CD8-positive, alpha-beta T cell (primary cell): ENCODE measurements at regions of chr7 and their contacts with region 1.

Region 1: GRCh38 chr7:155769701-155770100 is 42.6 kb downstream of the SHH start:
- DNase-seq: no peak
- ATAC-seq: no peak
- H3K4me3 ChIP-seq: no peak overlapping the region
- H3K4me3 Mint-ChIP-seq: no peak overlapping the region
- H3K27ac ChIP-seq: no peak overlapping the region
- H3K27ac Mint-ChIP-seq: no peak overlapping the region
- H3K4me1 ChIP-seq: peaks cover 5% of the 10 kb centered on the region
- H3K4me1 Mint-ChIP-seq: peaks cover 7% of the 10 kb centered on the region
- H3K27me3 ChIP-seq: no peaks in the 10 kb centered on the region
- H3K27me3 Mint-ChIP-seq: no peaks in the 10 kb centered on the region
- CTCF ChIP-seq: no peak

Region 2: DNA sequence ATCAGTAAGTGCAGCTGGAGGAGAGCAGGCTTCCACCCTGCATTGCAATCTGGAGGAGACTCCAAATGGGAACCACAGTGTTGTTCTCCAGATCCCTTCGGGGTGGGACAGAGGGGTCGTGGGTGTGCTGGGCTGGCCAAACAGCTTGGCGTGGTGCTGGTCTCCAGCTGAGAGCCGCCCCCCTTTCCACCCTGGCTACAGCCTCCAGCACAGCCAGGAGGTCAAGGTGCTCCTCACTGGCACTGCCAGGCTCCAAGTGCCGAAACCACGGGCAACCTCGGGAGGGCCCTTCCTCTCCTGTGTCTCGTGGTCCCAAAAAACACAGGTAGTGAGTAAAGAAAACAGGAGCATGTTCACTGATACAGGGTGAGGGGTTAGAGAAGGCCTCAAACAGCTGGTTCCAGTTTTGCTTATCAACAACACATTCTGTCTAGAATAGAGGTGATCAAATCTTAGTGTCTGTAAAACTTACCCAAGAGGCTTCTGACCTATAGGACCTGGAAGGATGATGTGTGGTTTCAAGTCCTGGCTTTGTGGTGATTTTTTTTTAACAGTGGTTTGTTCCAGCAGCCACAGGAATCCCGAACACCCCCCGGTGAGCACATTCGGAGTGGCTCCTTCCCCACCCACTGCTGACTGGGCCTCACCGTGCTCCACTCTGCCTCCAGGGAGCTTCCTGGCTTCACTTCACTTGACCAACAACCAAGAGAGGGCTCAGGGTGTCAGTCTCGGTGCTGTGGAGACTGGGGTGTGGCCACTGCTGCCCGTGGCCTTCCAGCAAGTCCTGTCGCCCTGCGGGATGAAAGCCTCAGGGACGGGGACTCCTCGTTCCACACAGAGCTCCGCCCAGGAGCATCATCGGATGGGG is 342.9 kb before region 1 on chr7:
- CTCF ChIA-PET with region 1: no interaction called
- POLR2A ChIA-PET with region 1: no interaction called
- intact Hi-C with region 1: no loop called
- DNase-seq: no peak
- ATAC-seq: no peak
- H3K4me3 ChIP-seq: no peak overlapping the region
- H3K4me3 Mint-ChIP-seq: no peak overlapping the region
- H3K27ac ChIP-seq: no peak overlapping the region
- H3K27ac Mint-ChIP-seq: no peak overlapping the region
- H3K4me1 ChIP-seq: no peaks in the 10 kb centered on the region
- H3K4me1 Mint-ChIP-seq: no peaks in the 10 kb centered on the region
- H3K27me3 ChIP-seq: no peaks in the 10 kb centered on the region
- H3K27me3 Mint-ChIP-seq: peaks cover 29% of the 10 kb centered on the region
- CTCF ChIP-seq: no peak

Region 3: GRCh38 chr7:155590215-155591018 is 179.3 kb before region 1 on chr7:
- CTCF ChIA-PET with region 1: interaction called, 147 read pairs
- POLR2A ChIA-PET with region 1: no interaction called
- intact Hi-C with region 1: no loop called
- DNase-seq: peak in 1 of 9 experiments; percentile 16
- ATAC-seq: no peak
- H3K4me3 ChIP-seq: no peak overlapping the region
- H3K4me3 Mint-ChIP-seq: no peak overlapping the region
- H3K27ac ChIP-seq: no peak overlapping the region
- H3K27ac Mint-ChIP-seq: no peak overlapping the region
- H3K4me1 ChIP-seq: no peaks in the 10 kb centered on the region
- H3K4me1 Mint-ChIP-seq: no peaks in the 10 kb centered on the region
- H3K27me3 ChIP-seq: peaks cover 0 to 2% of the 10 kb centered on the region in 2 experiments
- H3K27me3 Mint-ChIP-seq: peaks cover 28% of the 10 kb centered on the region
- CTCF ChIP-seq: no peak

Region 4: DNA sequence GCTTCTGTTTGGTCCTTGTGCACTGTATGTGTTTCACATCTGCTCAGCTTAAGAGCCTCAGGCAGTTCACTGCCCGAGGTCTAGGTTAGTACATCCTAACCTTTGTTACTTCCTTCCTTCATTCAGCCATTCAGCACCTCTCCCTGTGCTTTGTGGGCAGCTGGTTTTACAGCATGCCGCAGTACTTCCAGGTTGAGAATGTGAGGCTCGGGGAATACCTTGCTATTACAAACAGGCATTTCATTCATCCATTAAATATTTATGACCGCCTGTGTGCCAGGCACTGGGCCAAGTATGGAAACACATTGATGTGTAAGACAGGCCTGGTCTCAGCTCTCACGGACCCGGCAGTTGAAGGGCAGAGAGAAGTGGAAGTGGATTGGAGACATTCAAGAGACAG is 39.9 kb before region 1 on chr7:
- CTCF ChIA-PET with region 1: interaction called, 6 read pairs
- POLR2A ChIA-PET with region 1: no interaction called
- intact Hi-C with region 1: loop called in 1 of 2 experiments (anchors 5 kb)
- DNase-seq: no peak
- ATAC-seq: no peak
- H3K4me3 ChIP-seq: no peak overlapping the region
- H3K4me3 Mint-ChIP-seq: no peak overlapping the region
- H3K27ac ChIP-seq: no peak overlapping the region
- H3K27ac Mint-ChIP-seq: peak overlapping the region; percentile 2
- H3K4me1 ChIP-seq: peaks cover 18% of the 10 kb centered on the region
- H3K4me1 Mint-ChIP-seq: peaks cover 55% of the 10 kb centered on the region
- H3K27me3 ChIP-seq: no peaks in the 10 kb centered on the region
- H3K27me3 Mint-ChIP-seq: no peaks in the 10 kb centered on the region
- CTCF ChIP-seq: no peak

Region 5: GRCh38 chr7:155758348-155758747 is 11.4 kb before region 1 on chr7:
- CTCF ChIA-PET with region 1: interaction called, 12 read pairs
- POLR2A ChIA-PET with region 1: interaction called, 3 read pairs
- intact Hi-C with region 1: no loop called
- DNase-seq: no peak
- ATAC-seq: no peak
- H3K4me3 ChIP-seq: no peak overlapping the region
- H3K4me3 Mint-ChIP-seq: no peak overlapping the region
- H3K27ac ChIP-seq: no peak overlapping the region
- H3K27ac Mint-ChIP-seq: no peak overlapping the region
- H3K4me1 ChIP-seq: peaks cover 28% of the 10 kb centered on the region
- H3K4me1 Mint-ChIP-seq: peaks cover 66% of the 10 kb centered on the region
- H3K27me3 ChIP-seq: no peaks in the 10 kb centered on the region
- H3K27me3 Mint-ChIP-seq: no peaks in the 10 kb centered on the region
- CTCF ChIP-seq: no peak

Region 6: GRCh38 chr7:156423876-156424275 is 654.2 kb after region 1 on chr7:
- CTCF ChIA-PET with region 1: no interaction called
- POLR2A ChIA-PET with region 1: no interaction called
- intact Hi-C with region 1: no loop called
- DNase-seq: no peak
- ATAC-seq: no peak
- H3K4me3 ChIP-seq: no peak overlapping the region
- H3K4me3 Mint-ChIP-seq: no peak overlapping the region
- H3K27ac ChIP-seq: no peak overlapping the region
- H3K27ac Mint-ChIP-seq: no peak overlapping the region
- H3K4me1 ChIP-seq: no peaks in the 10 kb centered on the region
- H3K4me1 Mint-ChIP-seq: no peaks in the 10 kb centered on the region
- H3K27me3 ChIP-seq: no peaks in the 10 kb centered on the region
- H3K27me3 Mint-ChIP-seq: peaks cover 24% of the 10 kb centered on the region
- CTCF ChIP-seq: no peak

Region 7: DNA sequence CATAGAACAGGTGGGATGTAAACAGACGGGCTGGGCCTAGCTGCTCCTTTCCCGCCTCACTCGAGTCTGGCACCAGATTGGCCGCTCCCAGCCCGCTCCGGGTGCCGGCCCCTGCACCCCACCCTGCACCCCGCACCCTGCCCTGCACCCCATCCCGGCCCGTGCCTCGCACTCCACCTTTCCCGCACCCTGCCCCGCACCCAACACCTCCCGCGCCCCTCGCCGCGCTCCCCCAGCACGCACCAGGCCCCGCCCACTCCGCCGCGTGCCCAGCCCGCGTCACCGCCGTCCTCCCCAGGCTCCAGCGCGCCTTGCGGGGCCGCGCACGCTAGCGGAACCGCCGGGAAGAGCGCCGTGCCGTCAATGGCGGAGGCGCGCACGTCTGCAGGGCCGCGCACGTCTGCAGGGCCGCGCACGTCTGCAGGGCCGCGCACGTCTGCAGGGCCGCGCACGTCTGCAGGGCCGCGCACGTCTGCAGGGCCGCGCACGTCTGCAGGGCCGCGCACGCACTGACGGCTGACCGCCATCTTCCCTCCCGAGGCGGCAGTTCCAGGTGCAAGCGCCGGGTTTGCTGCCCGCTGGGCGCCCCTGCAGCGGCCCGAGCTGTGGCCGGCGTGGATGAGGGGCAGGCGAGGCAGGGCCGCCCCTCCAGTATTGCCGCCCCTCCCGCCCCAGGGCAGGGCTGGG is 1368.9 kb after region 1 on chr7 and contains the start of gene UBE3C:
- CTCF ChIA-PET with region 1: no interaction called
- POLR2A ChIA-PET with region 1: no interaction called
- intact Hi-C with region 1: loop called in 1 of 2 experiments (anchors 5 kb)
- DNase-seq: peak; percentile 81 to 97 (median 89)
- ATAC-seq: peak; percentile 85
- H3K4me3 ChIP-seq: peak within 1 kb of the TSS; percentile 57 to 59
- H3K4me3 Mint-ChIP-seq: peak within 1 kb of the TSS; percentile 84
- H3K27ac ChIP-seq: peak within 1 kb of the TSS; percentile 76 to 88
- H3K27ac Mint-ChIP-seq: peak within 1 kb of the TSS; percentile 94
- H3K4me1 ChIP-seq: peaks cover 38% of the 10 kb centered on the region
- H3K4me1 Mint-ChIP-seq: peaks cover 41% of the 10 kb centered on the region
- H3K27me3 ChIP-seq: no peaks in the 10 kb centered on the region
- H3K27me3 Mint-ChIP-seq: no peaks in the 10 kb centered on the region
- CTCF ChIP-seq: no peak
- total RNA-seq, gene UBE3C: 25.3 to 28.8 TPM